Psoas muscle (tissue), 8 donors: ENCODE measurements at regions of chr13 and their contacts with region 1.

Region 1: DNA sequence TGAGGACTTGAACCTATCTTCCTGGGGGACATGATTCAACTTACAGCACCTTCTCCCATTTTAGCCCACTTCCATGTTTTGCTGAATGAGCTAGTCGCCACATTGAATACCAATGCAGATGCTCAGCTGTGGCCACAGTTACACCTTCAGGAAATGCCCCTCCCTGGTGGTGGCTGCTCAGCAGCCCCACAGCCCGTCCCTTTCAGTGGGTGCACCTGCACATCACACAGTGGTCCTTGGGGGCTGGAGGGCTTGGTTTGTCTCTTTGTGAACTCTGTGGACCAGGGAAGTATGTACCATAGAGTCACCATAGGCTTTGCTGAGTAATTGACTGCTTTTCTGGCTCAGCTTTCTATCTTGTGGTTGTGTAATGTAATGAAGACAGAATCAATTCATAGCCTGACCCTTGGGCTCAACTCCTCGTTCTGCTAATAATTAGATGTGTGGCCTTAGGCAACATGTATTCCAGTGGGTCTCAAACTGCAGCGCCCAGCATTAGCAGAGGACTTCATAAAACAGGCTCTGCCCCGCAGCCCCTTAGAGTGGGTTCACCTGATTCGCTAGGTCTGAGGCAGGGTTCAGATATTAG is 48.1 kb upstream of the FARP1 start:
- DNase-seq: no peak
- ATAC-seq: no peak
- H3K4me3 ChIP-seq: no peak overlapping the region
- H3K27ac ChIP-seq: no peak overlapping the region
- H3K4me1 ChIP-seq: no peaks in the 10 kb centered on the region
- H3K27me3 ChIP-seq: no peaks in the 10 kb centered on the region
- CTCF ChIP-seq: no peak

Region 2: GRCh38 chr13:98111168-98112098 is 16.7 kb after region 1 on chr13:
- intact Hi-C with region 1: loop called in 1 of 2 experiments (anchors 1 kb)
- DNase-seq: no peak
- ATAC-seq: no peak
- H3K4me3 ChIP-seq: no peak overlapping the region
- H3K27ac ChIP-seq: no peak overlapping the region
- H3K4me1 ChIP-seq: no peaks in the 10 kb centered on the region
- H3K27me3 ChIP-seq: no peaks in the 10 kb centered on the region
- CTCF ChIP-seq: no peak

Region 3: DNA sequence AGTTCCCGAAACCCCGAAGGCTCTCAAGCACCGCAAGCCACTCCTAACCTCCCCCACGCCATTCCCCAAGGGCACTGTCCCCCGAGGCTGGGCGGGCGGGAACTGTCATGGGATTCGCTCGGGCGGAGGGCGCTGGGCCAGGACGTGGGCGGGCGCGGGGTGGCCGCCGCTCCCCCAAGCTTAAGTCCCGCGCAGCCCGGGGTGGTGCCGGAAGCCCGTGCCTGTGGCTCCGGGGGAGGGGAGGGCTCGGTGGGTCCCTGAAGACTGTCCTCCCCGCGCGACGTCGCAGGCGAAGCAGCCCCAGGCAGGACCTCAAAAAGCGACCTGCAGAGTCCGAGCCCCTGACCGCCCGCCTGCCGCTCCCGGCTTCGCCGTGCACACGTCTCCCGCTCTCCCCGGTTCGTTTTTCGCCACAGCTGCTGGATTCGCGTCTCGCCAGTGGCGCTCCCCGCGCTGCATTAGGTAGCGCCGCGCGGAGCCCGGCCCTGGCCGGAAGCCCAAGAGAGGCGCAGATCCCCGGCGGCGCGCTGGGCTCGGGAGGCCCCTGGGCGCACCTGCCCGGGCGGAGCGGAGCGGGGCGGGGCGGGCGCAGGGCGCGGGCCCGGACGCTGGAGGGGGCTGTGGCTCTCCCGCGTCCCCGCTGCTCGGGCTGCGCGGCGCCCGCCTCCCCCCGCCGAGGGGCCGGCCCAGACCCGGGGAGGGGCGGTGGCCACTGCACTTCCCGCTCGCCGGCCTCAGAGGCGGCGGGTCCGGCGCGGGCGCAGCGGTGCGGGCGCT is 47.8 kb after region 1 on chr13 and contains the start of gene FARP1:
- intact Hi-C with region 1: no loop called
- DNase-seq: peak; percentile 76 to 81
- ATAC-seq: peak; percentile 92 to 94 (median 93)
- H3K4me3 ChIP-seq: peak within 1 kb of the TSS; percentile 75
- H3K27ac ChIP-seq: peak within 1 kb of the TSS; percentile 65
- H3K4me1 ChIP-seq: peaks cover 9% of the 10 kb centered on the region
- H3K27me3 ChIP-seq: peaks cover 0 to 16% (median 0%) of the 10 kb centered on the region in 3 donors
- CTCF ChIP-seq: peak; percentile 47
- total RNA-seq, gene FARP1: 9.2 to 19.4 (median 13.0) TPM